ENCODE measurements at regions of chr2 and their contacts with region 1.

Region 1: DNA sequence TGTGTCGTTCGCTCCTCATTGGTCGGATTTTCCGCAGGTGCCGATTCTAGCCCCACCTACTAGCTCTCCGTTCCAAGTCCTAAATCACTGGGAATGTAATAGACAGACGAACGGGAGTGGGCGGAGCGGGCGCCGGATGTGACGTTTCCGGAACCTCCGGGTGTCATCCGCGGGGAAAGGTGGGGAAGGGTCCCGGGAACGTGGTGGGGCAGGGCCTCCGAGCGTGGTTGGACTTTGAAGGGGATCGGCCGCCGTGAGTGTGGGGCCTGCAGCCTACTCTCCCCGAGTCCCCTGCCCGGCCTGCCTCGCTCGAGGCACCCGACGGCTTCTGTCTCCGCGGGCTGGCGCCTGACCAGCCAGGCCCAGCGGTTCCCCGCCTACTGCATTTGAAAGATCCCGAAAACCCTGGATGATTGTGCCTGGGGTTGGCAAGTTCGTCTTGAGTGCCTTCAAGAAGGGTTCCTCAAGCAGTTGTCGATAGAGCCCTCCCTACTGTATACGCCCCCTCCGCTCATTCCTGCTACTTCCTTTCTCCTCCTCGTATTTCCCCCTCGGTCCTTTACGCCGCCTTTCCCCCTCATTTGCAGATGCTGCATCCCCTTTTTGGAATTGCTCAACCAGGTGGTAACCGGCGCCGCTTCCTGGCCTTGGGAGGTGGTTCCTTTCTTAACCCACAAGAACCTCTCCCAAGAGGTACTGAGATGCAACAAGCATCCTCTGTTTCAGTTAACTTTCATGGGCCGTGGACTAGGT is at the start of gene STAMBP:
- DNase-seq: peak; percentile 98
- ATAC-seq: peak; percentile 99
- total RNA-seq, gene STAMBP: 27.7 TPM

Region 2: DNA sequence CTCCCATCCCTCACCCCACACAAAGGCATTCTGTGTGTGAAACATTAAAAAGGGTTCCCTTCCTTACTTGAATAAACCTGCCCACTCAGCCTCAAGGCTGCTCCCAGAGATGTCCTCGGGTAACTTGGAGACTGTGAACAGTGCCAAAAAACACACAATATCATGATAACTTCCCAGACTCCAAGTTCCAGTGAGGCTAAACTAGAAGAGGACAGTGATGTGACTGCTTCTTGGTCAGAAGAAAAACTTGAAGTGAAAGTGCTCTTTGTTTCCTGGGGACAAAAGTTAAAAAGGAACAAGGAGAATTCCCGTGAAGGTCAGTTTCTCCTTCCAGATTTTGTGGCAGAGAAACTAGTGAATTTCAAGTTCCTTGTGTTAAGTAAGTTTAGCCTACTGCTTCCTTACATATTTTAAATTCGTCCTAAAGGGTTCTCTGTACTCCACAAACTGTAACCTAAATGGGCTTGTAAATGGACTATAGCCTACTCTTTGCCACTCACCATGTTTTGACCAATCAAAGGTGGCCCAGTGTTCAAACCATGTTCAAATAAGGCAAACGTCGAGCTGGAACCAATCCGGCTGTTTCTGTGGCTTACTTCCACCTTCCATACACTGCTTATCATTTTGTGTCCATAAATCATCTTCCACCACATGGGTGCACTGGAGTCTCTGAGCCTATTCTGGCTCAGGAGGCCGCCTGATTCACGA is 112.3 kb before region 1 on chr2:
- intact Hi-C with region 1: no loop called
- DNase-seq: no peak
- ATAC-seq: peak; percentile 63

Region 3: GRCh38 chr2:74147727-74148456 is 318.9 kb after region 1 on chr2 and contains the start of gene BOLA3:
- intact Hi-C with region 1: loop called (anchors 10 kb)
- DNase-seq: peak; percentile 93
- ATAC-seq: peak; percentile 99
- total RNA-seq, gene BOLA3: 89.6 TPM

Region 4: GRCh38 chr2:74261204-74261864 is 432.3 kb after region 1 on chr2:
- intact Hi-C with region 1: loop called (anchors 10 kb)
- DNase-seq: no peak
- ATAC-seq: peak; percentile 92

Region 5: DNA sequence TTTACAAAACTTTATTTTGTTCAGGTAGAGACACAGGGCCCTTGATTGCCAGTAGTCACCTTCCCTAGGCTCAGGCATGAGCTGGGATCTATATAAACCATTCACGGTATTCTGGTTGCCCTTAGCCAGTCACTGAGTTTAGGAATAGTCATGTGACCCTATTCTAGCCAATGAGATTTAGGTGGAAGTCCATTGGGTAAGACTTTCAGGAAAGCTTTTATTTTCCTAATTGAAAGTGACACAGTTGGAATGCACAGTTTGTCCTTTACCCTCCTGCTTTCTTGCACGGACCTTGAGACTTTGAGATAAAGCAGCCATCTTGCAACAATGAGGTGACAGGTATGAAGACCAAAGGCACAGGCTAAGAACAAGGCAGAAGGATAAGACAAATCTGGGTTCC is 492.7 kb after region 1 on chr2:
- intact Hi-C with region 1: no loop called
- DNase-seq: no peak
- ATAC-seq: no peak

Region 6: DNA sequence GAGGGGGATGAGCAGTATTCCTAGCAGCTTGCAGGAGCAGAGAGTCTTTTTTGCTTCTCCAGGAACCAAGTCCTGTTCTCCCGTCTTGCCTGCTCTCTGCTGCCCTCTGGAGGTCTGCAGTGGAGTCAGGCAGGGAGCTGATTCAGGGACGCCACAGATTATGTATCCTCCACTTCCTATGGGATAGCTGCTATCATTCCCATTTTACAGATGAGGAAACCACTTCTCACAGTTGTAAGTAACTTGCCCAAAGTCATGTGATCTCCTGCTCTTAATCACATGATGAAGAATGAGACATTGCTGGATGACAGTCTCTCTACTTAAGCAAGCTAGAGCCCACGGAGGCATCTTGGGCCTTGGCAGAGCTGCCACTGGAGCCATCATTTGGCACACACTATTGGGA is 505.9 kb after region 1 on chr2:
- intact Hi-C with region 1: loop called (anchors 10 kb)
- DNase-seq: peak; percentile 82
- ATAC-seq: peak; percentile 88

Region 7: GRCh38 chr2:74587664-74588277 is 758.8 kb after region 1 on chr2:
- intact Hi-C with region 1: loop called (anchors 10 kb)
- DNase-seq: peak; percentile 52
- ATAC-seq: peak; percentile 93